ENCODE measurements at regions of chr10 and their contacts with region 1.

Region 1: DNA sequence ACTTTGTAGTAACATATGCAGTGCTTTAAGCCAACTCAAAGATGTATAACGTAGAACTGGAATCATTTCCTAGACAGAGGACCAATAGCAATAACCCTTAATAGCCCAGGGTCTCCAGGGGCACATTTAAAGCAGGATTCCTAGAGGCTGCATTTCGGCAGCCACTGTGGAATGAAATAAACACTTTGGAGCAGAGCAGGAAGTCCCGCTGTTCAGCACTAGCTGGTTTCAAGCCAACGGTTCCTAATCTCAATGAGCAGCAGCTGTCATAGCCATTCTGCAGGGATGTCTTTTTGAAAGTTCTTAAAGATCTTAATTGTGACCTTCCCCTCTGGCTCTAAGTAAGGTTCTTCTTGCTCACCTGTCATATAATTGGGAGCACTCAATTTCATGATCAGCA is 18.4 kb upstream of the MACROH2A2 start:
- DNase-seq: no peak
- H3K4me3 ChIP-seq: no peak overlapping the region
- H3K27ac ChIP-seq: no peak overlapping the region
- H3K4me1 ChIP-seq: no peaks in the 10 kb centered on the region
- H3K27me3 ChIP-seq: peaks cover 5% of the 10 kb centered on the region
- CTCF ChIP-seq: no peak

Region 2: GRCh38 chr10:70115948-70116682 is 81.9 kb after region 1 on chr10:
- CTCF ChIA-PET with region 1: no interaction called
- dilution Hi-C with region 1: no loop called
- in situ Hi-C with region 1: no loop called
- intact Hi-C with region 1: no loop called
- DNase-seq: peak; percentile 25
- H3K4me3 ChIP-seq: no peak overlapping the region
- H3K27ac ChIP-seq: no peak overlapping the region
- H3K4me1 ChIP-seq: no peaks in the 10 kb centered on the region
- H3K27me3 ChIP-seq: no peaks in the 10 kb centered on the region
- CTCF ChIP-seq: peak; percentile 83 to 84

Region 3: GRCh38 chr10:70191972-70192305 is 157.7 kb after region 1 on chr10:
- CTCF ChIA-PET with region 1: no interaction called
- dilution Hi-C with region 1: loop called (anchors 10 kb)
- in situ Hi-C with region 1: no loop called
- intact Hi-C with region 1: no loop called
- DNase-seq: peak; percentile 66
- H3K4me3 ChIP-seq: no peak overlapping the region
- H3K27ac ChIP-seq: no peak overlapping the region
- H3K4me1 ChIP-seq: no peaks in the 10 kb centered on the region
- H3K27me3 ChIP-seq: no peaks in the 10 kb centered on the region
- CTCF ChIP-seq: no peak